Psoas muscle (tissue), 8 donors: ENCODE measurements at regions of chr11 and their contacts with region 1.

Region 1: GRCh38 chr11:67572747-67573419 is 10.7 kb upstream of the GSTP1 start:
- DNase-seq: peak; percentile 49 to 73
- ATAC-seq: peak; percentile 69 to 88 (median 77)
- H3K4me3 ChIP-seq: no peak overlapping the region
- H3K27ac ChIP-seq: no peak overlapping the region
- H3K4me1 ChIP-seq: no peaks in the 10 kb centered on the region
- H3K27me3 ChIP-seq: peaks cover 0 to 8% (median 0%) of the 10 kb centered on the region in 3 donors
- CTCF ChIP-seq: peak; percentile 89

Region 2: GRCh38 chr11:67013511-67014045 is 559.3 kb before region 1 on chr11:
- intact Hi-C with region 1: no loop called
- DNase-seq: no peak
- ATAC-seq: no peak
- H3K4me3 ChIP-seq: no peak overlapping the region
- H3K27ac ChIP-seq: no peak overlapping the region
- H3K4me1 ChIP-seq: no peaks in the 10 kb centered on the region
- H3K27me3 ChIP-seq: no peaks in the 10 kb centered on the region
- CTCF ChIP-seq: no peak

Region 3: DNA sequence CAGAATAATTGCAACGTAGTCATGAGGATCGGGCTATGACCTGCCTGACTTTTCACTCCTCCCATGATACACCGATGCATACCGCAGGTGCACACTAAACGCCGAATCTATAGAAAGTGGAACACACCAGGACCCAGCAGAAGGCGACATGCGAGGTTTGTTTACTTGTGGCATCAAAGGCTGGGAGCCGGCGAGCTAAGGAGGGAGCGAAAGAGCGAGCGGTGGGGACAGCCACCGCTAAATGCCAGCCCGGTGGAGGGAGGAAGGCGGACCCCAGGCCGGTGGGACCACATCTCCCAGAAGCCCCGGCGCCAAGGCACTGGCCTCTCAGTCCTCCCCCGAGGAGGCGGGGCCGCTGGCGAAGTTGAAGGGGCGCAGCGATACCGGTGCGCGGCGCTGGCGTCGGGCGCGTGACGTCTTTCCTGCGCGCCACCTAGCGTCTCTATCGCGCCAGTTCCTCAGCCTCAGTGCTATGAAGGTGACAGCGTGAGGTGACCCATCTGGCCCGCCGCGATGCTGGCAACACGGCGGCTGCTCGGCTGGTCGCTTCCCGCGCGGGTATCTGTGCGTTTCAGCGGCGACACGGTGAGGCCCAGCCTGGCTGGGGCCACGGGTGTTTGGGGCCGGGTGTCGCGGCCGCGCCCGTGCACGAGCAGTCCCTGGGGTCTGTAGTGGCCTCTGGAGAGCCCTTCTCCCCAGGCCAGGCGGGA is 33.8 kb after region 1 on chr11 and contains the start of gene NDUFV1:
- intact Hi-C with region 1: loop called in 1 of 2 experiments (anchors 5 kb)
- DNase-seq: peak; percentile 98 to 99
- ATAC-seq: peak; percentile 98 to 99 (median 98)
- H3K4me3 ChIP-seq: peak within 1 kb of the TSS; percentile 87
- H3K27ac ChIP-seq: peak within 1 kb of the TSS; percentile 88
- H3K4me1 ChIP-seq: peaks cover 27% of the 10 kb centered on the region
- H3K27me3 ChIP-seq: no peaks in the 10 kb centered on the region
- CTCF ChIP-seq: peak; percentile 61
- total RNA-seq, gene NDUFV1: 250 to 413 (median 364) TPM

Region 4: DNA sequence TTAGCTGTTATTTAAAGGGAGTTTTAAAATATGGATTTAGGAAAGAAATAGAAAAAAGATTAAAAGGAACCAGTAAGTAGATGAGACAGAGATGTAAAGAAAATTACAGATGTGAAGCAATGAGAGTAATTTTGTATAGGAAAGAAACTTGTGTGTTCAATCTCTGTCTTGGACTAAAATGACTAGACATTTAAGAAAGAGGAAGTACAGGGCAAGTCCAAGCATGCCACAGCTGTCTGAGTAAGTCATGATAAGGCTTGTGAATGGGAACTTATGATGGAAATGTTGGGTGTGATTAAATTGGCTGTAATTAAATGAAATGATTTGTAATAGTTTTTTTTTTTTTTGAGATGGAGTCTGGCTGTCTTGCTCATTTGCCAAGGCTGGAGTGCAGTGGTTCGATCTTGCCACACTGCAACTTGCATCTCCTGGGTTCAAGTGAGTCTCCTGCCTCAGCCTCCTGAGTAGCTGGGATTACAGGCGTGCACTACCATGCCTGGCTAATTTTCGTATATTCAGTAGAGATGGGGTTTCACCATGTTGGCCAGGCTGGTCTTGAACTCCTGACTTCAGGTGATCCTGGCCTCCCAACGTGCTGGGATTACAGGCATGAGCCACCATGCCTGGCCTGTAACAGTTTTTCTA is 83.5 kb after region 1 on chr11:
- intact Hi-C with region 1: loop called (anchors 5 kb)
- DNase-seq: no peak
- ATAC-seq: no peak
- H3K4me3 ChIP-seq: no peak overlapping the region
- H3K27ac ChIP-seq: no peak overlapping the region
- H3K4me1 ChIP-seq: no peaks in the 10 kb centered on the region
- H3K27me3 ChIP-seq: no peaks in the 10 kb centered on the region
- CTCF ChIP-seq: no peak